ENCODE measurements at regions of chr10 and their contacts with region 1.

Region 1: DNA sequence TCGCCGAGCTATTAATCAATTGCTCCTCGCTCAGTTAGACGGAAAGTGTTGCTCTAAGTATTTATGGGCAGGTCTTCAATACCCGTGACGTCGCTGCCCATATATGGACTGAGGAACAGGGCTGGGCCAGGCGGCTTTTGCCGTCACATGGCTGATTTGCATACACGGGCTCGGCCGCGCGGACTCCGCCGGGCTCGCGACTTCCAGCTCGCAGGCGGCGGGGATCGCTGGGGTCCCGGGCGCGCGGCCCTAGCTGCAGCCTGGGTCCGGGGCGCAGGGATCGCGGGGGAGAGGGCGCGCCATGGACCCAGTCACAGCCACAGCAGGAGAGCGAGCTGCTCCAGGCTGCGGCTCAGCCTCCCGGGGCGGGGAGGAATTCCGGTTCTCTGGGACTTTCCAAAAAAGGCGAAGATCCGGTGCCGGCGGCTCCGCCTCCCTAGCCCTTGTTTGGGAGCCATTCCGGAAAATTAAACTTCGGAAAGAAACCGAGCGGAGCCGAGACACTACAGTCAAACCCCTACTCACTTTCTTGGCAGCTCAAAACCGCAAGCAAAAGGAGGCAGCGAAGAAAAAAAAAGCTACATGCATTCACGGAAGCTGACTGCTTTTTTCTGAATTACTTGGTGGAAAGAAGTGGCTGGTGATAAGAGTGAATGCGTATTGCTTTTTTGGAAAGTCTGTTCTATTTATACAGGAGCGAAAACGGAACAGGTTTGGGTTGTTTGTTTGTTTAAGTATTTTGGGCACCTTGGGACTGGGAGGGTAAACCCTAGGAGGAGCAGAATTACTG is at the start of gene EGR2:
- DNase-seq: peak; percentile 97
- H3K4me3 ChIP-seq: peak within 1 kb of the TSS; percentile 62
- H3K27ac ChIP-seq: peak within 1 kb of the TSS; percentile 95
- H3K4me1 ChIP-seq: peaks cover 7% of the 10 kb centered on the region
- H3K27me3 ChIP-seq: peaks cover 5% of the 10 kb centered on the region
- CTCF ChIP-seq: no peak
- total RNA-seq, gene EGR2: 14.5 and 18.3 TPM in 2 replicates

Region 2: DNA sequence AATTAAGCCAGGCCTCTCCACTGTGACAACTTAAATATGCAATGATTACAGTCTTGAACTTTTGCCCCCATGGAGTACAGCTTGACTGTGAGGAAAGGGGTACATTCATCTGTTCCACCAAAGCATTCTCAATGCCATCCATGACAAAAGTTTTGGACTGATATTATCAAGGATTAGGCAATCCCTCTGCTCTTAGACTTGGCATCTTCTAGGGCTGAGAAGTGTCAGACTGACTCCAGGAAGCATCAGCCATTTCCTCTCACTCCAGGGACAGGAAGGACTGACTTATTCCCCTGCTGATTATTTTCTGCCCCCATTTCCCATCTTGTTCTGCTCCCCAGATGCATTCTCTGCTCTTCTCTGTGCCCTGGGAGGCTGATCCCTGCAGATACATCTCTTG is 372.7 kb before region 1 on chr10:
- CTCF ChIA-PET with region 1: no interaction called
- POLR2A ChIA-PET with region 1: no interaction called
- intact Hi-C with region 1: loop called (anchors 5 kb)
- DNase-seq: peak; percentile 99
- H3K4me3 ChIP-seq: no peak overlapping the region
- H3K27ac ChIP-seq: peak overlapping the region; percentile 78
- H3K4me1 ChIP-seq: peaks cover 37% of the 10 kb centered on the region
- H3K27me3 ChIP-seq: no peaks in the 10 kb centered on the region
- CTCF ChIP-seq: no peak

Region 3: DNA sequence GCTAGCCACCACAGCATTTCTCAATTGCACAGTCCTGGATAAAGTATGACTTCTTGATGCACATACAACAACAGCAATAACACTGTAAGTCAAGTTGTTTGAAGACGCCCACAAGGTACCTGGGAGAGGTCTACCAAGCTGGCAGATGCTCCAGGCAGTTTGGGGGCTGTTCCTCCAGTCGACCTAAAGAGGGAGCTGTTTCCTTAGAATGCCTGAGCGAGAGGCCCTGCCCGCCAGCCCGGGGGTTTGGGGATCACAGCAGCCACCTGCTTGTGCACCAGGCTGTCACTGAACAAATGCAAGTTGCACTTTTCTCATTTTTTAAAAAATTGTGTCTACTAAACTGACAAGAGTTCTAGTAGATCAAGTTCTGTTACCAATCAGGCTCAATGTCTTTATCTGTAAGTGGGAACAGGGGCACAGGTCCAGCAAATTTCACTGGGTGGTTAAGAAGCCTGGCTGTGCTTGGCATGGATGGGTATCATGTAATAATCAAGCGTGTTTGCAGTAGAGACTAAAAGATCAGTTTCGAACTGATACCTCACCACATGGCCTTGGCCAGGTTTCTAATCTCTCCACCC is 205.8 kb before region 1 on chr10:
- CTCF ChIA-PET with region 1: interaction called, 5 read pairs
- POLR2A ChIA-PET with region 1: interaction called, 3 read pairs
- intact Hi-C with region 1: loop called (anchors 2 kb)
- DNase-seq: peak; percentile 87
- H3K4me3 ChIP-seq: no peak overlapping the region
- H3K27ac ChIP-seq: no peak overlapping the region
- H3K4me1 ChIP-seq: peaks cover 26% of the 10 kb centered on the region
- H3K27me3 ChIP-seq: no peaks in the 10 kb centered on the region
- CTCF ChIP-seq: peak; percentile 96

Region 4: DNA sequence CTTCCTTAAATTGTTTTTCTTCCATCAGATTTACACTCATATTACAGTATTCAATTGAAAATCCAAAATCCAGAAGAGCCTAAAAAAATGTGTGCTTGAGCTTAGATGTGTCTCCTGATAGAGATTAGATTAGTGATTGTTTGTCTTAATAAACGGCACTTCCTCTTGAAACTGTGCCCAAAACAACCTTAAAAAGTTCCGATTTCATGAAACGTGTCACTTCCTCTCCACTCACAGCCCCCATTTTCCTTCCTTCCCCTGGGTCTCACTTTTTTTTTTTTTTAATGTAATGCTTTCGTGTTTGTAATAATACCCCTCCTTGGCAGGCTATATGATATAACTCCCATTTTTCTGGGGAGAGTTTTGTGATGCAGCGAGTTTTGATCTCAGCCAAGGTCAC is 126.8 kb before region 1 on chr10:
- CTCF ChIA-PET with region 1: interaction called, 5 read pairs
- POLR2A ChIA-PET with region 1: no interaction called
- intact Hi-C with region 1: loop called (anchors 5 kb)
- DNase-seq: peak; percentile 81
- H3K4me3 ChIP-seq: no peak overlapping the region
- H3K27ac ChIP-seq: peak overlapping the region; percentile 94
- H3K4me1 ChIP-seq: peaks cover 51% of the 10 kb centered on the region
- H3K27me3 ChIP-seq: no peaks in the 10 kb centered on the region
- CTCF ChIP-seq: no peak

Region 5: GRCh38 chr10:63083904-63084689 is 267.6 kb after region 1 on chr10:
- CTCF ChIA-PET with region 1: interaction called, 3 read pairs
- POLR2A ChIA-PET with region 1: no interaction called
- intact Hi-C with region 1: loop called (anchors 5 kb)
- DNase-seq: peak; percentile 90
- H3K4me3 ChIP-seq: no peak overlapping the region
- H3K27ac ChIP-seq: no peak overlapping the region
- H3K4me1 ChIP-seq: peaks cover 7% of the 10 kb centered on the region
- H3K27me3 ChIP-seq: no peaks in the 10 kb centered on the region
- CTCF ChIP-seq: peak; percentile 82